H1 (cell line): ENCODE measurements at regions of chr5 and their contacts with region 1.

Region 1: DNA sequence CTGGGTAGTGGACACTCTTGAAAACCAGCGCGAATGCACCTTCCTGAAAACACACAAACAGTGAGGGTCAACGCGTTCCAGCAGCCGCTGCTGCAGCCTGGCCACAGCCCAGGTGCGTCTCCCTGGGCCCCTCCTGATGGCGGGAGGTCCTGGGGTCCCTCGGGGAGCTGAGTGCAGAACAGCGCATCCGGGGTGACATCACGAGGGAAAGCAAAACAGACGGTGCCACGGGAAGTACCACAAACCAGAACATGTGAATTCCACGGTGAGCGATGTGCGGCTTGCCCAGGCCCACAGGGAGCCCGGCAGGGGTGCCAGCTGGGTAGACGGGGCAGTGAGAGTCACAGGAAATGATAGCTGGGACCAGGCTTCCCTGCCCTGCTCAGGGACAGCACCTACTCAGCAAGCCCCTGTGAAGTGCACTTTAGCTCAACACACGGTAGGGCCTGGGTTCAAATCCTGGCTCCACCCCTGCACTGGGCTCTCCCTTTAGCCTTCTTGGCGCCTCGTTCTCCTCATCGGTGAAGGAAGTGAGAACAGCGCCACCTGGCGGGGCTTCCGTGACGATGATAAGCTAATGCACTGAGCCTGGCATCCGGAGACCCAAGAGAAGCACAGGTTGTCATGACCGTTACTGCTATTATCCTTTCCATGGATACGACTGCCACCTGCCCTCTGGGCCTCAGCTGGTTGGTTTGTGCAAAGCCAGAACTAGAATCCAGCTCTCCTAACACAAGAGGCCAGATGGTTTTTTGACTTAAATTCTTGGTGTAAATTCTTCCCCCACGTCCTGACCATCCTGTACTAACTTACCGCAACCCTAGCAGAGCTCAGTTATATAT is 24.6 kb downstream of the GFPT2 start:
- DNase-seq: peak; percentile 68 to 90
- H3K4me3 ChIP-seq: no peak overlapping the region
- H3K27ac ChIP-seq: no peak overlapping the region
- H3K4me1 ChIP-seq: peaks cover 12 to 16% (median 13%) of the 10 kb centered on the region in 4 experiments
- H3K27me3 ChIP-seq: no peaks in the 10 kb centered on the region
- CTCF ChIP-seq: peak in 2 of 3 experiments; percentile 77 to 91; a peak in 3 of 4 replicates
- EP300 ChIP-seq: no peak
- POLR2A ChIP-seq: peak in 1 of 2 experiments; percentile 51; a peak in 2 of 3 replicates
- RAD21 ChIP-seq: peak; percentile 47 to 70

Region 2: DNA sequence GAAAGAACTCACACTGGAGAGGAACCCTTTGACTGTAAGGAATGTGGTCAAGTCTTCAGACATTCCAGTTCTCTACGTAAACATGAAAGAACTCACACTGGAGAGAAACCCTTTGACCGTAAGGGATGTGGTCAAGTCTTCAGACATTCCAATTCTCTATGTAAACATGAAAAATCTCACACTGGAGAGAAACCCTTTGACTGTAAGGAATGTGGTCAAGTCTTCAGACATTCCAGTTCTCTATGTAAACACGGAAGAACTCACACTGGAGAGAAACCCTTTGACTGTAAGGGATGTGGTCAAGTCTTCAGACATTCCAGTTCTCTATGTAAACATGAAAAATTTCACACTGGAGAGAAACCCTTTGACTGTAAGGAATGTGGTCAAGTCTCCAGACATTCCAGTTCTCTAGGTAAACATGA is 69.2 kb before region 1 on chr5:
- CTCF ChIA-PET with region 1: no interaction called
- POLR2A ChIA-PET with region 1: no interaction called
- DNase-seq: no peak
- H3K4me3 ChIP-seq: no peak overlapping the region
- H3K27ac ChIP-seq: no peak overlapping the region
- H3K4me1 ChIP-seq: no peaks in the 10 kb centered on the region
- H3K27me3 ChIP-seq: no peaks in the 10 kb centered on the region
- CTCF ChIP-seq: no peak
- EP300 ChIP-seq: no peak
- POLR2A ChIP-seq: no peak
- RAD21 ChIP-seq: no peak

Region 3: GRCh38 chr5:180315762-180316212 is 12.7 kb before region 1 on chr5:
- CTCF ChIA-PET with region 1: interaction called, 192 read pairs
- POLR2A ChIA-PET with region 1: interaction called, 6 read pairs
- DNase-seq: peak in 1 of 2 experiments; percentile 93
- H3K4me3 ChIP-seq: no peak overlapping the region
- H3K27ac ChIP-seq: no peak overlapping the region
- H3K4me1 ChIP-seq: no peaks in the 10 kb centered on the region
- H3K27me3 ChIP-seq: no peaks in the 10 kb centered on the region
- CTCF ChIP-seq: peak; percentile 91 to 99 (median 98)
- EP300 ChIP-seq: no peak
- POLR2A ChIP-seq: no peak
- RAD21 ChIP-seq: peak; percentile 59 to 72

Region 4: GRCh38 chr5:180343831-180344327 is 15.4 kb after region 1 on chr5:
- CTCF ChIA-PET with region 1: interaction called, 30 read pairs
- POLR2A ChIA-PET with region 1: interaction called, 146 read pairs
- DNase-seq: no peak
- H3K4me3 ChIP-seq: peak overlapping the region in 1 of 4 experiments; percentile 25; a peak in 2 of 8 replicates
- H3K27ac ChIP-seq: peak overlapping the region; percentile 20; the same call in 1 of the 2 replicates
- H3K4me1 ChIP-seq: peaks cover 36 to 65% (median 47%) of the 10 kb centered on the region in 4 experiments
- H3K27me3 ChIP-seq: no peaks in the 10 kb centered on the region
- CTCF ChIP-seq: no peak
- EP300 ChIP-seq: no peak
- POLR2A ChIP-seq: no peak
- RAD21 ChIP-seq: no peak

Region 5: DNA sequence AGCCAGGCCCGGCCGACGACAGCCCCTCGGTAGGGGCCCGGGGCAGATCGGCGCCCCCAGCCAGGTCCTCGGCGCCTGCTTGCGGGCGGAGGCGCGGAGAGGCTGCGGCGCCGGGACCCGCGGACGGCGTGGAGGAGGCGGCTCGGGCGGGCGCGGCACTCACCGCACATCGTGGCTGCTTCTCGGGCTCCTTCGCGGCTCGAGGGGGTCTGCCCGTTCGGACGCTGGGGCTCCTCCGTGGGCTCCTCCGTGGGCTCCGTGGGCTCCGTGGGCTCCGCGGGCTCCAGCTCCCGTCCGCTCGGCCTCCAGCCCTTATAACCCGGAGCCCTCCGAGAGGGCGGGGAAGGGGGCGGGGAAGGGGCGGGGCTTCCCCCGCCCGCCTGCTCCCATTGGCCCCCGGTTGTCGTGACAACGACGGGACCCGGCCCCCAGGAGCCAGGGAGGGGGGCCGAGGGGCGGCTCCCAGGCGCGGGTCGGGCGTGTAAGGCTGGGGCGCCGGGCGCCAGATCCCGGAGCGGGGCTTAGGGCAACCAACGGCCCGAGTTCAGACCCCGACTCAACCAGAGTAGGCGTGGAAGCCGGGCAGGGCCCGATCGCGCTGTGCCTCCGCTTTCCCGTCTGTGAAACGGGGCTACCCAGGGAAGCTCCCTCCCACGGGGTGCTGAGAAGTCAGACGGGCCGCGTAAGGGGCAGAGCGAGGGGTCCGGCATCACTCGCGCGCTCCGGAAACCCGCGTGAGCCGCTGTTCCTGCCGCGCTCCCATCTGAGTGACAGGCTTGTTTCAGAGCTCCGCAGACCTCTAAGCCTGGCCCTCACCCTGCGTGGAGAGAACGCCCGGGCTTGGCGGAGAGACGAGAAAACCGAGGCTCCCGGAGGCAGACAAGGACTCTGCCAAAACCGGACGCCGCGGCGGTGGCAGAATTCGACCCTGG is 24.8 kb after region 1 on chr5 and contains the start of gene GFPT2:
- CTCF ChIA-PET with region 1: interaction called, 11 read pairs
- POLR2A ChIA-PET with region 1: interaction called, 146 read pairs
- DNase-seq: peak; percentile 41 to 91
- H3K4me3 ChIP-seq: peak within 1 kb of the TSS; percentile 65 to 97 (median 70)
- H3K27ac ChIP-seq: no peak within 1 kb of the TSS
- H3K4me1 ChIP-seq: peaks cover 8 to 29% (median 14%) of the 10 kb centered on the region in 4 experiments
- H3K27me3 ChIP-seq: peaks cover 0 to 19% (median 18%) of the 10 kb centered on the region in 4 experiments; a peak in 5 of 7 replicates
- CTCF ChIP-seq: no peak
- EP300 ChIP-seq: no peak
- POLR2A ChIP-seq: peak in 1 of 2 experiments; percentile 61; a peak in 1 of 3 replicates
- RAD21 ChIP-seq: no peak
- total RNA-seq, gene GFPT2: 141 and 143 TPM in 2 replicates

Region 6: GRCh38 chr5:180370861-180371641 is 42.5 kb after region 1 on chr5:
- CTCF ChIA-PET with region 1: interaction called, 10 read pairs
- POLR2A ChIA-PET with region 1: interaction called, 4 read pairs
- DNase-seq: no peak
- H3K4me3 ChIP-seq: no peak overlapping the region
- H3K27ac ChIP-seq: no peak overlapping the region
- H3K4me1 ChIP-seq: no peaks in the 10 kb centered on the region; a peak in 2 of 7 replicates
- H3K27me3 ChIP-seq: no peaks in the 10 kb centered on the region; a peak in 1 of 7 replicates
- CTCF ChIP-seq: peak in 1 of 3 experiments; percentile 32; a peak in 1 of 4 replicates
- EP300 ChIP-seq: no peak
- POLR2A ChIP-seq: no peak
- RAD21 ChIP-seq: peak; percentile 25 to 47; a peak in 3 of 4 replicates

Region 7: DNA sequence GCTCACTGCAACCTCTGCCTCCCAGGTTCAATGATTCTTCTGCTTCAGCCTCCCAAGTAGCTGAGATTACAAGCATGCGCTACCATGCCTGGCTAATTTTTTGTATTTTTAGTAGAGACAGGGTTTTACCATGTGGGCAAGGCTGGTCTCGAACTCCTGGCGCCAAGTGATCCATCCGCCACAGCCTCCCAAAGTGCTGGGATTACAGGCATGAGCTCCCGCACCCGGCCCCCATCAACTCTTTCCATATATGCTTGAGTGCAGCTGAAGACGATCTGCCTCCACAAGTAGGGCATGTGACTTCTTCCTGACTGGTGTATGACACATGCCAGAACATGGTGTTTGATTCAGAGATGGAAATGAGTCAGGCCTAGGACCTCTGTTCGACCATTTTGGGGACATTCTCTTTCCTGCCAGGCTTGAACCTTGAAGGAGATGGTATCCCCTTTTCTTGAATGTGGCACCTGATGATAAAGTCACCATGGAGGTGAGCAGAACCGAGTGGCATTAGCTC is 158.2 kb after region 1 on chr5:
- CTCF ChIA-PET with region 1: interaction called, 10 read pairs
- POLR2A ChIA-PET with region 1: interaction called, 4 read pairs
- DNase-seq: no peak
- H3K4me3 ChIP-seq: no peak overlapping the region
- H3K27ac ChIP-seq: no peak overlapping the region
- H3K4me1 ChIP-seq: peaks cover 0 to 5% (median 2%) of the 10 kb centered on the region in 4 experiments; a peak in 4 of 7 replicates
- H3K27me3 ChIP-seq: no peaks in the 10 kb centered on the region
- CTCF ChIP-seq: no peak
- EP300 ChIP-seq: no peak
- POLR2A ChIP-seq: no peak
- RAD21 ChIP-seq: no peak

Region 8: GRCh38 chr5:180532268-180532667 is 203.8 kb after region 1 on chr5:
- CTCF ChIA-PET with region 1: no interaction called
- POLR2A ChIA-PET with region 1: no interaction called
- DNase-seq: no peak
- H3K4me3 ChIP-seq: no peak overlapping the region
- H3K27ac ChIP-seq: no peak overlapping the region
- H3K4me1 ChIP-seq: no peaks in the 10 kb centered on the region
- H3K27me3 ChIP-seq: no peaks in the 10 kb centered on the region
- CTCF ChIP-seq: no peak
- EP300 ChIP-seq: no peak
- POLR2A ChIP-seq: no peak
- RAD21 ChIP-seq: no peak